ENCODE measurements at regions of chr9 and their contacts with region 1.

Region 1: GRCh38 chr9:76393963-76394679 is at the start of gene RFK:
- DNase-seq: peak; percentile 91
- H3K27ac ChIP-seq: peak within 1 kb of the TSS; percentile 89
- CTCF ChIP-seq: peak; percentile 51

Region 2: DNA sequence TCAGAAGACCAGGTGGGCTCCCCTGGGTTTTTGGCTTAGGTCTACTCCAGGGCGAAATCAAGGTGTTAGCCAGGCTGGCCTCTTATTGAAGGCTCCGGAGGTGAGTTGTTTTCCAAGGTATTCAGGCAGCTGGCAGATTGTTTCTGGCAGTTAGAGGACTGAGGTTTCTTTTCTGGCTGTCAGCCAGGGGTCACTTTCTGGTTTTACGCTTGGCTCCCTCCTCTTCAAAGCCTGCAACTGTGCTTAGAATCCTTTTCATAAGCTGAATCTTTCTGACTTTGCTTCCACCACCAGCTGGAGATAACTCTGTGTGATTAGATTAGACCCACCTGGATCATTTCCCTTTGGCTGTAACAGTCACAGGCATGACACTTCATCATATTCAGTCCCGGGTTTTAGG is 24.5 kb before region 1 on chr9:
- CTCF ChIA-PET with region 1: interaction called, 13 read pairs
- POLR2A ChIA-PET with region 1: no interaction called
- DNase-seq: no peak
- H3K27ac ChIP-seq: no peak overlapping the region
- CTCF ChIP-seq: no peak

Region 3: GRCh38 chr9:76433836-76434235 is 39.7 kb after region 1 on chr9:
- CTCF ChIA-PET with region 1: no interaction called
- POLR2A ChIA-PET with region 1: no interaction called
- DNase-seq: no peak
- H3K27ac ChIP-seq: no peak overlapping the region
- CTCF ChIP-seq: no peak